CD4-positive, alpha-beta memory T cell (primary cell): ENCODE measurements at regions of chr17 and their contacts with region 1.

Region 1: DNA sequence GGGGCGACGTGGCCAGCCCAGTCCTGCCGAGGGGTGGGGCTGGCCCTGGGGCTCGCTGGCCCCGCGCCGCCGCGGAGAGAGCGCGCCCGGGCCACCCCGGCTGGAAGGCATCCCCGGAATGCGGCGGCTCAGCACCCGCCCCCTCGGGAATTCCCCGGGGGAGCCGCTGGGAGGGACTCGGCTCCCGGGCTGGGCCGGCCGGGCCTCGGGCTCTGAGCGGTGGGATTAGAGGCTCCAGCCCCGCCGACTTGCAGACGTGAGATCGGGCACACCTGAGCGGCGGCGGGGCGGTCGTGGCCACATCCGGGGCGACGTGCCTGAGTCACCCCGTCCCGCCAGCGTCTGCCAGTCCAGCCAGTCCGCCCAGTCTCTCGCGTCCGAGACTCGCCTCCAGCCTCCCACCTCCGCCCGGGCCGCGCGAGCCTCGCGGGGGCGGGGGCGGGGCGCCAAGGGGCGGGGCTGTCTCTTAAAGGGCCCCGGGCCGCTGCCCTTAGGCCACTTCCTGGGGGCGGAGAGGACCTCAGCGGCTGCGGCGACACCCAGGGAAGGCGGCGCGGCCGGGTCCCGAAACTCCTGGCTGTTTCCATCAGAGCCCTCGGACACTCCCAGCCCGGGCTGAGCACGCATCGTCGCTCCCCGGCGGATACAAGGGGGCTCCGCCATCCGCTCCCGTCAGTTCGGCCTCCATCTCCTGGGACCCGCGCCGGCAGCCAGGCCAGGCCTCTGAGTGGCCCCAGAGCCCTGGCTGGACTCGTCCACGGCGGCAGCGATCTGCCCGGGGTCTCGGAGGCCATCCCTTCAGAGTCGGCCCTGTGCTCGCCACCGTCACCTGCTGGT is at the start of gene KCTD11:
- DNase-seq: peak; percentile 64 to 88 (median 68)
- H3K4me3 ChIP-seq: peak within 1 kb of the TSS; percentile 29 to 49
- H3K4me3 Mint-ChIP-seq: peak within 1 kb of the TSS; percentile 80 to 95 (median 84)
- H3K27ac ChIP-seq: peak within 1 kb of the TSS; percentile 68
- H3K27ac Mint-ChIP-seq: peak within 1 kb of the TSS; percentile 62 to 95 (median 87)
- H3K4me1 ChIP-seq: peaks cover 44% of the 10 kb centered on the region
- H3K4me1 Mint-ChIP-seq: peaks cover 21 to 61% (median 40%) of the 10 kb centered on the region in 4 donors
- H3K27me3 ChIP-seq: no peaks in the 10 kb centered on the region
- H3K27me3 Mint-ChIP-seq: no peaks in the 10 kb centered on the region
- total RNA-seq, gene KCTD11: 3.5 to 4.3 TPM

Region 2: GRCh38 chr17:7173687-7174602 is 177.9 kb before region 1 on chr17:
- CTCF ChIA-PET with region 1: no interaction called
- POLR2A ChIA-PET with region 1: no interaction called
- intact Hi-C with region 1: no loop called
- DNase-seq: peak; percentile 34 to 56 (median 41)
- H3K4me3 ChIP-seq: peak overlapping the region in 1 of 2 donors; percentile 1
- H3K4me3 Mint-ChIP-seq: no peak overlapping the region
- H3K27ac ChIP-seq: no peak overlapping the region
- H3K27ac Mint-ChIP-seq: no peak overlapping the region
- H3K4me1 ChIP-seq: peaks cover 25% of the 10 kb centered on the region
- H3K4me1 Mint-ChIP-seq: peaks cover 7 to 12% (median 8%) of the 10 kb centered on the region in 4 donors
- H3K27me3 ChIP-seq: peaks cover 18% of the 10 kb centered on the region
- H3K27me3 Mint-ChIP-seq: peaks cover 7 to 11% of the 10 kb centered on the region in 2 donors

Region 3: DNA sequence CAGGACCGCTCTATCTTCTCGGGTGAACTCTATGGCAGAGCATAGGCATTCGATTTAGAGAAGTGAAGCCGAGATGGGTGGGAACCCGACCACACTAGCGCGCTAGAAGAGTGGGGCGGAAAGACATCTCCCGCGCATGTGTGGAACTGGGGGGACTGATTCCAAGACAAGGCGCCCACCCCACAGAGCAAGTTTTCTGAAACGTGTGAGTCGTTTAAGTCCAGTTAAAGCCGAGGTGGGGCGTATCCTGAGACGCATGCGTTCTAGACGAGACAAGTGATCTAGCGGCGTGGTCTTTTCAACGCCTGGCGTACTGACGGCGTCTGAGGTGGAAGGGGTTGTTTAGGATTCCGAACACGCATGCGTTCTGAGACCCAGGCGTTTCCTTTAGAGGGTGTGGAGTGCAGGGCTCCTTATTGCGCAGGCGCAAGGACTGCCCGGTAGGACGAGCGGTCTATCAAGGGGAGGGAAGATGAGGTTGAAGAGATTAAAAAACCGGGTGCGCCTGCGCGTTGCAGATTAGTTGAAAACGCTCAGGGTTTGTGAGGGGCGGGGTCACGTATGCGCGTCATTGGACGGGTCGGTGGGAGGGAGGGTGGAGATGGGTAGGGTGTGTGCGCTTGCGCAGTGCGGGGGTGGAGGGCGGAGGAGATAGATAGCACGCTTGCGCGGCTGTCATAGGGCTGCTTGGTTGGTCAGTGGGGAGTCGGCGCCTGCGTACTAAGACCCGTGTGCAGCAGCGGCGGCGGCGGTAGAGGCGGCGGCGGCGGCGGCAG is 44.8 kb before region 1 on chr17 and contains the start of gene EIF5A:
- CTCF ChIA-PET with region 1: interaction called, 3 read pairs
- POLR2A ChIA-PET with region 1: interaction called, 6 read pairs
- intact Hi-C with region 1: loop called (anchors 5 kb)
- DNase-seq: peak; percentile 99 to 100 (median 100)
- H3K4me3 ChIP-seq: peak within 1 kb of the TSS; percentile 81 to 85
- H3K4me3 Mint-ChIP-seq: peak within 1 kb of the TSS; percentile 93 to 97 (median 95)
- H3K27ac ChIP-seq: peak within 1 kb of the TSS; percentile 100
- H3K27ac Mint-ChIP-seq: peak within 1 kb of the TSS; percentile 99 to 100 (median 99)
- H3K4me1 ChIP-seq: peaks cover 35% of the 10 kb centered on the region
- H3K4me1 Mint-ChIP-seq: peaks cover 29 to 47% (median 36%) of the 10 kb centered on the region in 4 donors
- H3K27me3 ChIP-seq: no peaks in the 10 kb centered on the region
- H3K27me3 Mint-ChIP-seq: peaks cover 0 to 4% of the 10 kb centered on the region in 2 donors
- total RNA-seq, gene EIF5A: 240 to 244 TPM

Region 4: GRCh38 chr17:7329374-7329996 is 22.4 kb before region 1 on chr17:
- CTCF ChIA-PET with region 1: interaction called, 39 read pairs
- POLR2A ChIA-PET with region 1: interaction called, 146 read pairs
- intact Hi-C with region 1: loop called (anchors 1 kb)
- DNase-seq: peak; percentile 97 to 99 (median 97)
- H3K4me3 ChIP-seq: peak overlapping the region; percentile 94 to 99
- H3K4me3 Mint-ChIP-seq: peak overlapping the region; percentile 97 to 98 (median 98)
- H3K27ac ChIP-seq: peak overlapping the region; percentile 82
- H3K27ac Mint-ChIP-seq: peak overlapping the region; percentile 93 to 99 (median 98)
- H3K4me1 ChIP-seq: peaks cover 49% of the 10 kb centered on the region
- H3K4me1 Mint-ChIP-seq: peaks cover 32 to 58% (median 42%) of the 10 kb centered on the region in 4 donors
- H3K27me3 ChIP-seq: no peaks in the 10 kb centered on the region
- H3K27me3 Mint-ChIP-seq: no peaks in the 10 kb centered on the region

Region 5: DNA sequence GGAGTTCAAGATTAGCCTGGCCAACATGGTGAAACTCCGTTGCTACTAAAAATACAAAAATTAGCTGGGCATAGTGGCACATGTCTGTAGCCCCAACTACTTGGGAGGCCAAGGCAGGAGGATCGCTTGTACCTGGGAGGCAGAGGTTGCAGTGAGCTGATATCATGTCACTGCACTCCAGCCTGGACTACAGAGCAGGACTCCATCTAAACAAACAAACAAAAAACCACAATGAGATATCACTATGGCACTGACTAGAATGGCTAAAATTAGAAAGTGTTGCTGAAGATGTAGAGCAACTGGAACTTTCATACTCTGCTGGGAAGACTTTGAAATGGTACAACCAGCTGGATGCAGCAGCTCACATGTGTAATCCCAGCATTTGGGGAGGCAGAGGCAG is 22.5 kb after region 1 on chr17:
- CTCF ChIA-PET with region 1: interaction called, 30 read pairs
- POLR2A ChIA-PET with region 1: interaction called, 3 read pairs
- intact Hi-C with region 1: no loop called
- DNase-seq: no peak
- H3K4me3 ChIP-seq: no peak overlapping the region
- H3K4me3 Mint-ChIP-seq: no peak overlapping the region
- H3K27ac ChIP-seq: no peak overlapping the region
- H3K27ac Mint-ChIP-seq: no peak overlapping the region
- H3K4me1 ChIP-seq: no peaks in the 10 kb centered on the region
- H3K4me1 Mint-ChIP-seq: no peaks in the 10 kb centered on the region
- H3K27me3 ChIP-seq: no peaks in the 10 kb centered on the region
- H3K27me3 Mint-ChIP-seq: peaks cover 7 to 16% of the 10 kb centered on the region in 2 donors

Region 6: DNA sequence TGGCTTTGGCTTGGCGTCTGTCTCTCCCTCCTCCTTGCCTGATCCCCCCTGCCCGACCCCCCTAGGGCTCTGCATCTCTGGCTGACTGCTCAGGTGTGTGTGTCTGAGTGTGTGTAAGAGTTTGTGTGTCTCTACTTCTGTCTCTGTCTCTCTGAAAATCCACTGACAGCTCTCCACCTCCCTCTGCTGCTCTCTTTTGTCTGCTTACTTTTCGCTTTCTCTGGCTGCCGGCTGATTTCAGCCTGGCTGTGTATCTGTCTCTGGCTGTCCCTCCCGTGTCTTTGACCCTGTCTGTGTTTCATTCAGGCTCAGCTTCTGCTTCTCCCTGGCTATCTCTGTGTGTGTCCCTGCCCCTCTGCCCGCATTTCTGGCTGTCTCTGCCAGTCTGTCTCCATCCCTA is 64.4 kb after region 1 on chr17:
- CTCF ChIA-PET with region 1: interaction called, 4 read pairs
- POLR2A ChIA-PET with region 1: no interaction called
- intact Hi-C with region 1: loop called (anchors 1 kb)
- DNase-seq: no peak
- H3K4me3 ChIP-seq: no peak overlapping the region
- H3K4me3 Mint-ChIP-seq: peak overlapping the region in 1 of 8 donors; percentile 3
- H3K27ac ChIP-seq: no peak overlapping the region
- H3K27ac Mint-ChIP-seq: peak overlapping the region in 1 of 7 donors; percentile 29
- H3K4me1 ChIP-seq: no peaks in the 10 kb centered on the region
- H3K4me1 Mint-ChIP-seq: peaks cover 0 to 2% (median 0%) of the 10 kb centered on the region in 4 donors
- H3K27me3 ChIP-seq: no peaks in the 10 kb centered on the region
- H3K27me3 Mint-ChIP-seq: no peaks in the 10 kb centered on the region

Region 7: DNA sequence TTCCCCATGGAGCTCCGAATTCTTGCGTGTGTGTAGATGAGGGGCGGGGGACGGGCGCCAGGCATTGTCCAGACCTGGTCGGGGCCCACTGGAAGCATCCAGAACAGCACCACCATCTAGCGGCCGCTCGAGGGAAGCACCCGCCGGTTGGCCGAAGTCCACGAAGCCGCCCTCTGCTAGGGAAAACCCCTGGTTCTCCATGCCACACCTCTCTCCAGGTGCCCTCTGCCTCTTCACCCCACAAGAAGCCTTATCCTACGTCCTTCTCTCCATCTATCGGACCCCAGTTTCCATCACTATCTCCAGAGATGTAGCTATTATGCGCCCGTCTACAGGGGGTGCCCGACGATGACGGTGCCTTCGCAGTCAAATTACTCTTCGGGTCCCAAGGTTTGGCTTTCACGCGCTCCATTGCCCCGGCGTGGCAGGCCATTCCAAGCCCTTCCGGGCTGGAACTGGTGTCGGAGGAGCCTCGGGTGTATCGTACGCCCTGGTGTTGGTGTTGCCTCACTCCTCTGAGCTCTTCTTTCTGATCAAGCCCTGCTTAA is 209.2 kb after region 1 on chr17:
- CTCF ChIA-PET with region 1: interaction called, 36 read pairs
- POLR2A ChIA-PET with region 1: interaction called, 21 read pairs
- intact Hi-C with region 1: loop called (anchors 1 kb)
- DNase-seq: peak; percentile 75 to 85 (median 76)
- H3K4me3 ChIP-seq: peak overlapping the region; percentile 72 to 84
- H3K4me3 Mint-ChIP-seq: peak overlapping the region; percentile 89 to 98 (median 94)
- H3K27ac ChIP-seq: peak overlapping the region; percentile 96
- H3K27ac Mint-ChIP-seq: peak overlapping the region; percentile 95 to 99 (median 97)
- H3K4me1 ChIP-seq: peaks cover 37% of the 10 kb centered on the region
- H3K4me1 Mint-ChIP-seq: peaks cover 25 to 37% (median 30%) of the 10 kb centered on the region in 4 donors
- H3K27me3 ChIP-seq: no peaks in the 10 kb centered on the region
- H3K27me3 Mint-ChIP-seq: no peaks in the 10 kb centered on the region